ENCODE measurements at regions of chr2 and their contacts with region 1.

Region 1: GRCh38 chr2:56860991-56861390 is 677.2 kb downstream of the CCDC85A start:
- DNase-seq: no peak
- H3K4me3 ChIP-seq: no peak overlapping the region
- H3K27ac ChIP-seq: no peak overlapping the region
- H3K4me1 ChIP-seq: no peaks in the 10 kb centered on the region
- H3K27me3 ChIP-seq: no peaks in the 10 kb centered on the region
- CTCF ChIP-seq: no peak
- POLR2A ChIP-seq: no peak

Region 2: GRCh38 chr2:54995553-54995952 is 1865.4 kb before region 1 on chr2:
- intact Hi-C with region 1: no loop called
- DNase-seq: no peak
- H3K4me3 ChIP-seq: no peak overlapping the region
- H3K27ac ChIP-seq: no peak overlapping the region
- H3K4me1 ChIP-seq: peaks cover 0 to 5% of the 10 kb centered on the region in 2 donors
- H3K27me3 ChIP-seq: no peaks in the 10 kb centered on the region
- CTCF ChIP-seq: no peak
- POLR2A ChIP-seq: no peak

Region 3: DNA sequence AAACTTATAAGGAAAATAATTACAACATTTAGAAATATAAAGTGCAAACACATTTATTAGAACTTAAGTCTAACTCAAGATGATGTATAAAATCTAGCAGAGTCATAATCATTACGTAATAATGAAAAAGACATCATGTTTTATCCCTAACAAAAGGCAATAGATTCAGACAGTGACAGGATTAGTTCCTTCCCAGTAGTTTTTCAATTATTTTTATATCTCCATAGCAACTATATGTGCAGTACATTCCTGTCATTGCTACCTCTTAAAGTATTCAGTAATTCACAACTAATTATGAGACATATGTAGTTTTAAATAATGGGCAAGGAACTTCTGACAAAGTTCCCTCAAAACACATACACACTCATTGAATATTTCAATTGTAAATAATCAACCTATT is 10.7 kb after region 1 on chr2:
- intact Hi-C with region 1: loop called (anchors 1 kb)
- DNase-seq: no peak
- H3K4me3 ChIP-seq: no peak overlapping the region
- H3K27ac ChIP-seq: no peak overlapping the region
- H3K4me1 ChIP-seq: no peaks in the 10 kb centered on the region
- H3K27me3 ChIP-seq: no peaks in the 10 kb centered on the region
- CTCF ChIP-seq: no peak
- POLR2A ChIP-seq: no peak